ENCODE measurements at regions of chr14 and their contacts with region 1.

Region 1: DNA sequence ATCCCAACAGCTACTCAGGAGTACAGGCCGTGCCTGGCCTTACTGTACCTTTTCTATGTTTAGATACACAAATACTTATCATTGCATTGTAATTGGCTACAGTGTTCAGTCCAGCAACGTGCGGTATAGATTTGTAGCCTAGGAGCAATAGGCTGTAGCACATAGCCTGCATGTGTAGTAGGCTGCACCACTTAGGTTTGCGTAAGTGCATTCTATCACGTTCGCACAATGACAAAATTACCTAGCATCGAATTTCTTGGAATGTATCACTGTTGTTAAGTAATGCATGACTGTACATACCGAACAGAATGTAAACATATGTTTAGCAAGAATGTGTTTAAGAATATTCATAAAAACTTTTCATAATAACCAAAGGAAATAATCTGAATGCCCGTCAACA is 31.9 kb downstream of the VRTN start:
- DNase-seq: no peak
- H3K4me3 ChIP-seq: no peak overlapping the region
- H3K27ac ChIP-seq: no peak overlapping the region
- H3K4me1 ChIP-seq: no peaks in the 10 kb centered on the region
- H3K27me3 ChIP-seq: no peaks in the 10 kb centered on the region
- CTCF ChIP-seq: no peak
- EP300 ChIP-seq: no peak
- POLR2A ChIP-seq: no peak

Region 2: GRCh38 chr14:74356892-74357575 is 23.1 kb before region 1 on chr14:
- in situ Hi-C with region 1: no loop called
- intact Hi-C with region 1: loop called (anchors 1 kb)
- DNase-seq: no peak
- H3K4me3 ChIP-seq: no peak overlapping the region
- H3K27ac ChIP-seq: no peak overlapping the region
- H3K4me1 ChIP-seq: no peaks in the 10 kb centered on the region
- H3K27me3 ChIP-seq: peaks cover 2% of the 10 kb centered on the region
- CTCF ChIP-seq: no peak
- EP300 ChIP-seq: no peak
- POLR2A ChIP-seq: no peak

Measured in transverse colon (tissue), 4 donors.